Ascending aorta (tissue), 2 donors: ENCODE measurements at regions of chr18 and their contacts with region 1.

Region 1: GRCh38 chr18:10453806-10454673 is at the start of gene APCDD1:
- DNase-seq: peak in 1 of 2 donors; percentile 81
- H3K4me3 ChIP-seq: peak within 1 kb of the TSS; percentile 63 to 85
- H3K27ac ChIP-seq: peak within 1 kb of the TSS; percentile 89 to 91
- H3K4me1 ChIP-seq: peaks cover 0 to 20% of the 10 kb centered on the region in 2 donors
- H3K27me3 ChIP-seq: no peaks in the 10 kb centered on the region
- CTCF ChIP-seq: no peak
- total RNA-seq, gene APCDD1: 77.0 TPM

Region 2: GRCh38 chr18:10006311-10006893 is 447.6 kb before region 1 on chr18:
- intact Hi-C with region 1: loop called (anchors 5 kb)
- DNase-seq: no peak
- H3K4me3 ChIP-seq: no peak overlapping the region
- H3K27ac ChIP-seq: peak overlapping the region in 1 of 2 donors; percentile 29
- H3K4me1 ChIP-seq: peaks cover 13 to 16% of the 10 kb centered on the region in 2 donors
- H3K27me3 ChIP-seq: no peaks in the 10 kb centered on the region
- CTCF ChIP-seq: peak in 2 of 3 experiments; percentile 31 to 55

Region 3: GRCh38 chr18:10140461-10141282 is 313.4 kb before region 1 on chr18:
- intact Hi-C with region 1: loop called (anchors 5 kb)
- DNase-seq: no peak
- H3K4me3 ChIP-seq: no peak overlapping the region
- H3K27ac ChIP-seq: no peak overlapping the region
- H3K4me1 ChIP-seq: peaks cover 6 to 14% of the 10 kb centered on the region in 2 donors
- H3K27me3 ChIP-seq: no peaks in the 10 kb centered on the region
- CTCF ChIP-seq: no peak

Region 4: DNA sequence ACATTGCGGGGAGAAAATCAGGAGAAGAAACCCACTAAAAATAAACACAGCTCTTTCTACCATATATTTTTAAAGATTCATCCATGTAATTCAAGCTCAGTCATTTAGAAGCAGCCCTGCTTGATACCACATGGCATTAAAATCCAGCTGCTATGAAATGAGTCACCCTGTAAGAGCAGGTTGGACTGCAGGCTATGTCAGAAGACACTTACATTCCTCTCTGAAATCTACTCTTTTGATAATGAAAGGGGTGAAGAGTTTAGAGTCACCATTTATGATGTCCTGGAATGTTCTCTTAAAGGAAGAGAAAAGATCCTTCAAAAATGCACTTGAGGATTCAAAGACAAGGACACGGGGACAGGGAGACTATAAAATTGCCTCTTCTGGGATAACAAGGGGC is 100.2 kb before region 1 on chr18:
- intact Hi-C with region 1: loop called (anchors 2 kb)
- DNase-seq: no peak
- H3K4me3 ChIP-seq: no peak overlapping the region
- H3K27ac ChIP-seq: peak overlapping the region; percentile 29 to 46
- H3K4me1 ChIP-seq: peaks cover 0 to 10% of the 10 kb centered on the region in 2 donors
- H3K27me3 ChIP-seq: no peaks in the 10 kb centered on the region
- CTCF ChIP-seq: no peak

Region 5: GRCh38 chr18:10519999-10520935 is 66.2 kb after region 1 on chr18:
- intact Hi-C with region 1: loop called (anchors 2 kb)
- DNase-seq: peak in 1 of 2 donors; percentile 92
- H3K4me3 ChIP-seq: peak overlapping the region in 1 of 2 donors; percentile 13
- H3K27ac ChIP-seq: no peak overlapping the region
- H3K4me1 ChIP-seq: peaks cover 11 to 12% of the 10 kb centered on the region in 2 donors
- H3K27me3 ChIP-seq: no peaks in the 10 kb centered on the region
- CTCF ChIP-seq: peak; percentile 78 to 89 (median 86)

Region 6: GRCh38 chr18:11178951-11179549 is 725.0 kb after region 1 on chr18:
- intact Hi-C with region 1: loop called (anchors 10 kb)
- DNase-seq: peak; percentile 71 to 92
- H3K4me3 ChIP-seq: no peak overlapping the region
- H3K27ac ChIP-seq: peak overlapping the region; percentile 82 to 90
- H3K4me1 ChIP-seq: peaks cover 3 to 39% of the 10 kb centered on the region in 2 donors
- H3K27me3 ChIP-seq: no peaks in the 10 kb centered on the region
- CTCF ChIP-seq: no peak